Activated CD4-positive, alpha-beta memory T cell treated with anti-CD3 and anti-CD28 coated beads for 36 hours (primary cell): ENCODE measurements at regions of chr1 and their contacts with region 1.

Region 1: DNA sequence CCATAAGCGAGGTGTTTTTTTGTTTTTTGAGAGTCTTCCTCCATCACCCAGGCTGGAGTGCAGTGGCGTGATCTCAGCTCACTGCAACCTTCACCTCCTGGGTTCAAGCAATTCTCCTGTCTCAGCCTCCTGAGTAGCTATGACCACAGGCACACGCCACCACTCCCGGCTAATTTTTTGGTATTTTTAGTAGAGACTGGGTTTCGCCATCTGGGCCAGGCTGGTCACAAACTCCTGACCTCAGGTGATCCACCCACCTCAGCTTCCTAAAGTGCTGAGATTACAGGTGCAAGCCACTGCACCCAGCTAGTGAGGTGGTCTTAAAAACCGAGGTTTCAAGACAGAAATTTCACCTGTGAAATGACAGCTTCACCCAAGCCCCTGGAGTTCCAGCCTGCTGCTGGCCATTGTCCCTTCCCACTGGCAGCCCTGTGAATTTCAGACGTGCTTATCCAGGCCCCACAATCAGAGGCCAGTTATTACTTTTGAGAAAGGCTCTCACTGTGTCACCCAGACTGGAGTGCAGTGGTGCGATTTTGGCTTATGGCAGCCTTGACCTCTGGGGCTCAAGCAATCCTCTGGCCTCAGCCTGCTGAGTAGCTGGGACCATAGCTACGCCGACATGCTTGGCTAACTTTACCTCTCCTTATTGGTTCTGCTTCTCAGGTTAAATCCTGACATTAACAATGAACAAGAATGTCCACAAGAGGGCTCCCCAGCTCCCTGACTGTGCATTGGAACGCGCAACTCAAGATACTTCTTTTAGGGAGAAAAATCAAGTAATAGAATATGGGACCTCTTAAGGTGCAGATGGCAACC is 19.4 kb downstream of the ENO1 start:
- DNase-seq: peak; percentile 56
- H3K4me3 Mint-ChIP-seq: no peak overlapping the region
- H3K27ac Mint-ChIP-seq: peak overlapping the region; percentile 84
- H3K4me1 Mint-ChIP-seq: peaks cover 33% of the 10 kb centered on the region
- H3K27me3 Mint-ChIP-seq: no peaks in the 10 kb centered on the region

Region 2: GRCh38 chr1:8873506-8874229 is 14.6 kb after region 1 on chr1:
- CTCF ChIA-PET with region 1: interaction called, 16 read pairs
- POLR2A ChIA-PET with region 1: interaction called, 45 read pairs
- intact Hi-C with region 1: loop called (anchors 1 kb)
- DNase-seq: peak; percentile 91
- H3K4me3 Mint-ChIP-seq: peak overlapping the region; percentile 95
- H3K27ac Mint-ChIP-seq: peak overlapping the region; percentile 87
- H3K4me1 Mint-ChIP-seq: peaks cover 61% of the 10 kb centered on the region
- H3K27me3 Mint-ChIP-seq: peaks cover 2% of the 10 kb centered on the region